Breast epithelium (tissue), 4 donors: ENCODE measurements at regions of chr11 and their contacts with region 1.

Region 1: DNA sequence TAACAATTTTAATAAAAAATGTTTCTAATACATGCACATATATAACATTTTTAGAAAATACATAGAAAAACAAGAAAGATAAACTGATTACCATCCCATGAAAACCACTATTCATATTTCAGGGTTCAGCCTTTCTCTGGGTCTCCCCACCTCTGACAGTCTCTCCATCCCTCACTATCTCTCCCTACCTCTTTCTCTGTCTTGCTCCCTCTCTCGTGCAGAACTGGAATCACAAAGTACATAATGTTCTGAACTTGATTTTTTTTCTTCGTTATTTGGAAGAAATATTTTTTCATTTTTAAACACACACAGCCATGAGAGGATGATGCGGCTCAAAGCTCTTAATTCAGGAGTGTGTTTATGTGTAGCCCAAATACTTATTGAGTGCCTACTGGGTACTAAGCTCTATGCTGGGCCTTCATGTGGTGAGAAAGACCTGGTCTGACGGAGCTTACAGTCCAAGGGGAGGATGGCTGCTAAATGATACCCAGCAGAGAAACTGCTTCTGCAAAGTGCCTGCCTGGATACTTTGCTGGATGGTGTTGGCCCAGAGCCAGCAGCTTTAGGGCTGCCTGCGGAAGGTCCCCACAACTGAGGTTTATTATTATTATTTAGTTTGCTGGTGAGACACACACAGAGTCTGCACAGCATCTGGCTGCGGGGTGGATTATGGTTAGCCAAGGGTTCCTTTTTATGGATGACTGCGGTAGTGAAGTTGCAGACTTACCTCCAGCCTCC is 42.6 kb downstream of the SC5D start:
- DNase-seq: no peak
- H3K4me3 ChIP-seq: no peak overlapping the region
- H3K27ac ChIP-seq: no peak overlapping the region
- H3K4me1 ChIP-seq: no peaks in the 10 kb centered on the region
- H3K27me3 ChIP-seq: no peaks in the 10 kb centered on the region
- CTCF ChIP-seq: peak in 1 of 3 donors; percentile 16
- POLR2A ChIP-seq: no peak

Region 2: DNA sequence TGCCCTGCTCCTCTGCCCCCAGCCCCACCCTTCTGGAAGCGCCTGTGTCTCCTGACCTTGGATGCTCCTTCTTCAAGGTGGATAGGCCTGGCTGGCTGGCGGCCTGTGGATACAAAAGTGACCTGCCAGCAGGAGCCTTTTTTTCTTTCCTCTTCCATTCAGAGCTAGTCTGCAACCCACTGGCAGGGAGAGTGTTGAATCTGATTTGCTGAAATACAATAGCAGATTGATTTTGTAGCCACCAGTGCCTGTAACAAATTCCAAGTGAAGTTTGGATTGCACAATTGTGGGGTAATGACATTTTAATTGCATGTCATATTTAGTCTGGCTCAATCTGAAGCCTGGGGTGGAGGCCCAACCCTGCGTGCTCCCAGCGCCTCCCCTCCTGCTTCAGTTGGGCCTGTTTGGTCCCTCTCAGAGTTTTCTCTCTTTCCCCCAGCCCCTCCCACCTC is 726.4 kb before region 1 on chr11:
- intact Hi-C with region 1: loop called (anchors 5 kb)
- DNase-seq: peak in 1 of 2 donors; percentile 58
- H3K4me3 ChIP-seq: no peak overlapping the region
- H3K27ac ChIP-seq: peak overlapping the region in 1 of 2 donors; percentile 55
- H3K4me1 ChIP-seq: peaks cover 0 to 5% of the 10 kb centered on the region in 2 donors
- H3K27me3 ChIP-seq: no peaks in the 10 kb centered on the region
- CTCF ChIP-seq: no peak
- POLR2A ChIP-seq: no peak

Region 3: GRCh38 chr11:120746836-120747609 is 588.1 kb before region 1 on chr11:
- intact Hi-C with region 1: no loop called
- DNase-seq: peak in 1 of 2 donors; percentile 80
- H3K4me3 ChIP-seq: no peak overlapping the region
- H3K27ac ChIP-seq: peak overlapping the region; percentile 20 to 33
- H3K4me1 ChIP-seq: no peaks in the 10 kb centered on the region
- H3K27me3 ChIP-seq: no peaks in the 10 kb centered on the region
- CTCF ChIP-seq: no peak
- POLR2A ChIP-seq: no peak

Region 4: DNA sequence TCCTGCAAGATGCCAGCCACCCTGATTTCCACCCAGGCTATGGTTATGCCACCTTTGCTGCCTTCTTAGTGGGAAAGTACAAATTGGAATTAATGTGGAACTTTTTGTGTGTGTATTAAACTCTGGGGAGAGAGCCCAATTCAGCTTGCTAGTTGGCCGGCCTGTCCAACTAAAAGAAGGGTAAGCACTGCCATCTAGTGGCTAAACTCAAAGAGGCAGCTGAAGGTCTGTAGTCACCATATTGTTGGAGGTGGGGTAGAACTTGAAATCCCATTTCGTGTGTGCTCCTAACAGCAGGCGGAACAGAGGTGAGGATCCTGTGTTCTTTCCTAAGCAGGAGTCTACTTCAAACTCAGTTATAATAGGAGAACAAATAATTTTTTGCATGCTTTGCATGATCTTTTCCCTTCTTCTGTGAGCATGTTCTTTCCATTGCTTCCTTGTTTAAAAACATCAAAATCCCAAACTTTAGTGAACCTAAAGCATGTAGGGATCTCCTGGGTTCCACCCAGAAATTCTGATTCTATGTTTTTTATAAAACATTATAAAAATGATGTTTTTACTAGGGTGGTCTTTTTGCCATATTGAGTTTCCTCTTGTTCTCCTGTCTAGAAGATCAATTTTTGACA is 256.4 kb after region 1 on chr11:
- intact Hi-C with region 1: loop called (anchors 10 kb)
- DNase-seq: peak in 1 of 2 donors; percentile 50
- H3K4me3 ChIP-seq: no peak overlapping the region
- H3K27ac ChIP-seq: no peak overlapping the region
- H3K4me1 ChIP-seq: no peaks in the 10 kb centered on the region
- H3K27me3 ChIP-seq: no peaks in the 10 kb centered on the region
- CTCF ChIP-seq: peak; percentile 69 to 91 (median 83)
- POLR2A ChIP-seq: no peak